ENCODE measurements at regions of chr3 and their contacts with region 1.

Region 1: DNA sequence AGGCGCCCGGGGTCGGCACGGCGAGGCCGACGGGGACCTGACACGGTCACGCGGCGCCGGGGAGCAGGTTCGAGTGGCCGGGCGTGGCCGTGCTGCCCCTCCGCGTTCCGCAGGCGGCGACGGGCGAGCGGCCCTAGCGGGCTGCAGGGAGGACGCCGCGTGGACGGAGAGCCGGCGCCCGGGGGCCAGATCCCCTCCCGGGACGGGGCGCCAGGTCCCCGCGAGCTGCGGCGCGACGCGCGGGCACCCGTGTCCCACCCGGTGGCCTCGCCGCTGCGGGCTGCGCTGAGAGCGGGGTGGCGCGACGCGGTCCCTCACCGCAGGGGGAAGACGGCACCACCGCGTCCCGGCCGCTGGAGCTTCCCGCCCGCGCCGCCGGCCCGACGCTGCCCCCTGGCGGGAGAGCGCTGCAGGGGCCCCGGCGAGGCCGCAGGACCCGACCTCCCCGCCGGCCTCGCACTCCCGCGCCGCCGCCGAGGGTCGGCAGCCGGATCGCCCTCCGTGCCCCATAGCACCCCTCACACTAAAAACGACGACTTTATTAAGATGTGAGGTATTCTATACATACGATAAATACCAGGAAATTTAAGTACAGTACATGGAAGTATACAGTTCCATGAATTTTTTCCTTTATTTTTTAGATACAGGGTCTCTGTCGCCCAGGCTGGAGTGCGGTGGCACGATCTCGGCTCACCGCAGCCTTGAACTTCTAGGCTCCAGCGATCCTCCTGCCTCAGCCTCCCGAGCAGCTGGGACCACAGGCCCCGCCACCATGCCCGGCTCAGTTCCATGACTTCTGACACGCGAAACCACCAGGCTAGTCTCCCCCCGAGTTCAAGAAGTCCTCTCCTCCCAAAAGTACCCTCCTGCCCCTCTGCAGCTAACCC is 1.3 kb upstream of the PIGZ start:
- DNase-seq: no peak
- H3K4me3 ChIP-seq: peak overlapping the region; percentile 62 to 82
- H3K27ac ChIP-seq: peak overlapping the region; percentile 64 to 72
- H3K4me1 ChIP-seq: peaks cover 0 to 26% (median 8%) of the 10 kb centered on the region in 4 donors
- H3K27me3 ChIP-seq: no peaks in the 10 kb centered on the region
- CTCF ChIP-seq: peak; percentile 74 to 96

Region 2: DNA sequence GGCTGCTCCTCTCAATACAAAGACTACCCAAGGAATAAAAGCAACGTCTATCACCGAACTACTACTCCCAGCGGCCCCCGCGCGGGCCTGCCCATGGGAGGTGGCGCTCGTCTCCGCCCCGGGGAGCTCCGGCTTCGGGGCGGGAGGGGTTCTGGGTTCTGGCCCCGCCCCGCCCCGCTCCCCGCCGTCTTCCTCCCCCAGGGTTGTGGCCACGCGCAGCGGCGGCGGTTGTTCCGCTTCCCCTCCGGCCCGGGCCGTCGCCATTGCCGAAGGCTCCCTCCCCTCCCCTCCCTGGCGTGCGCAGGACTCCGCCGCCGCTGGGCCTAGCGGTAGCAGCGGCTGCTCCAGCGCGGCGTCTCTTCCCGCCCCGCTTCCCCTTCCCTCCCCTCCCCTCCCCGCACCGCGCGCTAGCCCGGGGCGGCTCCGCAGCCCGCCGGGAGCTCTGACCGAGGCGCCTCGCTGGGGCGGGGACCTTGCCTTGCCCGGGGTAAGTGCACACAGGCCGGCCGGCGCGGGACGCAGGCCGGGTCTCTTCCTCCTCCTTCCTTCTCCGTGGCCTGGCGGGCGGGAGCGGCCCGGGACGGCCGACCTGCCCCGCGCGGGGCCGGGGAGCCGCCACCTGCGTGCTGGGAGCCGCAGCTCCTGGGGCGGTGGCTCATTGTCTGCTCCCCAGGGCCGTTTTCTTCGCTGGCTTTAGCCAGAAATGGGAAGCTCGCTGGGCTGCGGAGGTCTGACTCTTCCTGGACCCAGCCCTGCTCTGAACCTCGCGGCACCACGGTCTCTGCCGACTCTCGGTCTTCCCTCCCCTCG is 230.0 kb before region 1 on chr3 and contains the start of gene PAK2:
- intact Hi-C with region 1: loop called (anchors 10 kb)
- DNase-seq: peak; percentile 91 to 95
- H3K4me3 ChIP-seq: peak within 1 kb of the TSS; percentile 77 to 97
- H3K27ac ChIP-seq: peak within 1 kb of the TSS; percentile 91 to 99
- H3K4me1 ChIP-seq: peaks cover 0 to 30% (median 8%) of the 10 kb centered on the region in 4 donors
- H3K27me3 ChIP-seq: no peaks in the 10 kb centered on the region
- CTCF ChIP-seq: no peak

Region 3: DNA sequence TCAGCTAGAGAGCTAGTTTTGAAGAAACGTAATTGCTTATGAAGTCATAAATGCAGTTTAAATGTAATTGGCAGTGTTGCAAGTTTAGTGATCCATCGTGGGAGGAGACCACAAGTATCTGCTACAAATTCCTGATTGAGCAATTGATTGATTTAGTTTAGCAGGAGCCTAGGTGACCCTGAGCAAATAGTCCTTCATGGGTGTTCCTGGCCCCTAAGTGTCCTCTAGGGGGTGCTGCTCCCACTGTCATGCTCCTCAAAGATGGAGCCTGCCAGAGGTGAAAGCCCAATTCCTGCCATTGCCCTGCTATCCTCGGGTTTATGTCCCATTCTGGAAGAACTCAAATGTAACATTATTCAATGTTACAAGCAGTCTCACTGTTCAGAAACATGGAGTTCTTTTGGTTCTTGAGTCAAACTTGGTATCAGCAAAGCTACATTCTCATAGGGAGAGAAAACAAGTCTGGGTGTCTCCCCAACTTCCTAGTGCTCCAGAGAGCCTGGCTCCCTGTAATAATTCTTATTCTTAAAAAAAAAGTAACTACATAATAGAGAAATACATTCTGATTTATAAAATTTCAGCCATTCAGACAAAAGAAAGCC is 132.0 kb before region 1 on chr3:
- intact Hi-C with region 1: loop called (anchors 2 kb)
- DNase-seq: peak; percentile 65 to 77
- H3K4me3 ChIP-seq: no peak overlapping the region
- H3K27ac ChIP-seq: no peak overlapping the region
- H3K4me1 ChIP-seq: no peaks in the 10 kb centered on the region
- H3K27me3 ChIP-seq: no peaks in the 10 kb centered on the region
- CTCF ChIP-seq: peak; percentile 66 to 72

Region 4: DNA sequence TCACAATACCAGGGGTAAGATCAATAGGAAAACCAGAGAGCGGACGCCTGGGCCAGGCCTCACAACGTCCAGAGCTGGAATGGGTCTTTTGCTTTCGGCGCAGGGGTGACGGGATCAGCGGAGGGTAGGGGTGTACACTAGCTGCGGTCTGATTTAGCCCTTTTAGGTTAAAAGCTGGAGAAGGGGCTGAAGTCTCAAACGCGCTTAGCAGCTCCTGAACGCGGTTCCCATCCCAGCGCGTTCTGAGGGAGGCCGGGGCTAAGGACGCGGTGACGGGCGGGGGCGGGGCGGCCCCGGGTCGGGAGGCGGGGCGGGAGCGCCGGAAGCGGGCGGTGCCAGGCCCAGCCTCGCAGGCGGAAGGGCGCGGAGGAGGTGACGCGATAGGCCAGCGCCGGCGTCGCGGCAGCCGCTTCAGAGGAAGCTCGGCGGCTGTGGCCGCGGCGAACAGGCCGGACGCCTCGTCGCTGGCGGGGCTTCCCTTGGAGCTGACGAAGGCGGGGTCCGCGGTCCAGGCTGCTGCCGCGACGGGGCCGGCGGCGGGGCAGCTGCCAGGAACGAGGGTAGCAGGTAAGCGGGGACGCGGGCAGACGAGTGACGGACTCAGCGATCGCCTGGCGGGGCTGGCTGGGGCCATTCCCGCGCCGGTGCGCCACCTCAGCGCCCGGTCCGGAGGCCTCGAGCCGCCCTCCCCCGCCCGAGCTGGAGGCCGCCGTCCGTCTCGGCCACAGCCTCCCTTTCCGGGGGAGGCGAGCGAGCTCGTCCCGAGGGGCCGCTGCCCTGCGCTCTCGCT is 102.2 kb before region 1 on chr3 and contains the start of gene SENP5:
- intact Hi-C with region 1: no loop called
- DNase-seq: peak; percentile 80 to 94
- H3K4me3 ChIP-seq: peak within 1 kb of the TSS; percentile 76 to 99
- H3K27ac ChIP-seq: peak within 1 kb of the TSS; percentile 88 to 95
- H3K4me1 ChIP-seq: peaks cover 0 to 38% (median 21%) of the 10 kb centered on the region in 4 donors
- H3K27me3 ChIP-seq: no peaks in the 10 kb centered on the region
- CTCF ChIP-seq: no peak

Region 5: GRCh38 chr3:196942226-196942914 is 27.5 kb before region 1 on chr3 and contains the start of gene NCBP2:
- intact Hi-C with region 1: loop called (anchors 2 kb)
- DNase-seq: peak; percentile 98 to 99
- H3K4me3 ChIP-seq: peak within 1 kb of the TSS; percentile 70 to 94
- H3K27ac ChIP-seq: peak within 1 kb of the TSS; percentile 85 to 92
- H3K4me1 ChIP-seq: peaks cover 0 to 34% (median 27%) of the 10 kb centered on the region in 4 donors
- H3K27me3 ChIP-seq: no peaks in the 10 kb centered on the region
- CTCF ChIP-seq: peak; percentile 53 to 64

Measured in tibial artery (tissue), 4 donors.